Activated CD4-positive, alpha-beta T cell treated with anti-CD3 and anti-CD28 coated beads, Interleukin-2, amount 10 ng/mL, durations not matched to agents 24 days and 14 days (primary cell): ENCODE measurements at regions of chr13 and their contacts with region 1.

Region 1: GRCh38 chr13:48580185-48580803 is 47.4 kb upstream of the RCBTB2 start:
- DNase-seq: peak; percentile 91
- H3K4me3 Mint-ChIP-seq: no peak overlapping the region
- H3K27ac Mint-ChIP-seq: no peak overlapping the region
- H3K4me1 Mint-ChIP-seq: peaks cover 12% of the 10 kb centered on the region
- H3K27me3 Mint-ChIP-seq: peaks cover 70% of the 10 kb centered on the region

Region 2: GRCh38 chr13:48126944-48127830 is 453.1 kb before region 1 on chr13:
- intact Hi-C with region 1: loop called (anchors 1 kb)
- DNase-seq: peak; percentile 81
- H3K4me3 Mint-ChIP-seq: no peak overlapping the region
- H3K27ac Mint-ChIP-seq: no peak overlapping the region
- H3K4me1 Mint-ChIP-seq: peaks cover 18% of the 10 kb centered on the region
- H3K27me3 Mint-ChIP-seq: peaks cover 13% of the 10 kb centered on the region

Region 3: GRCh38 chr13:48334534-48335127 is 245.7 kb before region 1 on chr13:
- intact Hi-C with region 1: loop called (anchors 1 kb)
- DNase-seq: peak; percentile 65
- H3K4me3 Mint-ChIP-seq: no peak overlapping the region
- H3K27ac Mint-ChIP-seq: no peak overlapping the region
- H3K4me1 Mint-ChIP-seq: peaks cover 6% of the 10 kb centered on the region
- H3K27me3 Mint-ChIP-seq: no peaks in the 10 kb centered on the region

Region 4: GRCh38 chr13:49062297-49062903 is 482.1 kb after region 1 on chr13:
- intact Hi-C with region 1: no loop called
- DNase-seq: no peak
- H3K4me3 Mint-ChIP-seq: no peak overlapping the region
- H3K27ac Mint-ChIP-seq: no peak overlapping the region
- H3K4me1 Mint-ChIP-seq: peaks cover 5% of the 10 kb centered on the region
- H3K27me3 Mint-ChIP-seq: no peaks in the 10 kb centered on the region